Activated B cell treated with CpG ODN at 0.5 μM for 24 hours (primary cell): ENCODE measurements at regions of chr1 and their contacts with region 1.

Region 1: GRCh38 chr1:151198255-151199127 is at the start of gene PIP5K1A:
- DNase-seq: peak; percentile 94
- ATAC-seq: peak; percentile 93
- H3K4me3 Mint-ChIP-seq: peak within 1 kb of the TSS; percentile 99
- H3K27ac Mint-ChIP-seq: peak within 1 kb of the TSS; percentile 98
- H3K4me1 Mint-ChIP-seq: peaks cover 47% of the 10 kb centered on the region
- H3K27me3 Mint-ChIP-seq: no peaks in the 10 kb centered on the region
- CTCF ChIP-seq: no peak
- total RNA-seq, gene PIP5K1A: 63.2 and 77.7 TPM in 2 replicates

Region 2: GRCh38 chr1:151165738-151166505 is 32.6 kb before region 1 on chr1 and contains the starts of genes LYSMD1 and SCNM1:
- CTCF ChIA-PET with region 1: no interaction called
- POLR2A ChIA-PET with region 1: interaction called, 6 read pairs
- intact Hi-C with region 1: loop called (anchors 1 kb)
- DNase-seq: peak; percentile 87
- ATAC-seq: peak; percentile 96
- H3K4me3 Mint-ChIP-seq: peak within 1 kb of the TSS; percentile 92
- H3K27ac Mint-ChIP-seq: peak within 1 kb of the TSS; percentile 89
- H3K4me1 Mint-ChIP-seq: peaks cover 37% of the 10 kb centered on the region
- H3K27me3 Mint-ChIP-seq: no peaks in the 10 kb centered on the region
- CTCF ChIP-seq: no peak
- total RNA-seq, gene LYSMD1: 4.9 and 5.4 TPM in 2 replicates
- total RNA-seq, gene SCNM1: 52.8 and 58.2 TPM in 2 replicates

Region 3: DNA sequence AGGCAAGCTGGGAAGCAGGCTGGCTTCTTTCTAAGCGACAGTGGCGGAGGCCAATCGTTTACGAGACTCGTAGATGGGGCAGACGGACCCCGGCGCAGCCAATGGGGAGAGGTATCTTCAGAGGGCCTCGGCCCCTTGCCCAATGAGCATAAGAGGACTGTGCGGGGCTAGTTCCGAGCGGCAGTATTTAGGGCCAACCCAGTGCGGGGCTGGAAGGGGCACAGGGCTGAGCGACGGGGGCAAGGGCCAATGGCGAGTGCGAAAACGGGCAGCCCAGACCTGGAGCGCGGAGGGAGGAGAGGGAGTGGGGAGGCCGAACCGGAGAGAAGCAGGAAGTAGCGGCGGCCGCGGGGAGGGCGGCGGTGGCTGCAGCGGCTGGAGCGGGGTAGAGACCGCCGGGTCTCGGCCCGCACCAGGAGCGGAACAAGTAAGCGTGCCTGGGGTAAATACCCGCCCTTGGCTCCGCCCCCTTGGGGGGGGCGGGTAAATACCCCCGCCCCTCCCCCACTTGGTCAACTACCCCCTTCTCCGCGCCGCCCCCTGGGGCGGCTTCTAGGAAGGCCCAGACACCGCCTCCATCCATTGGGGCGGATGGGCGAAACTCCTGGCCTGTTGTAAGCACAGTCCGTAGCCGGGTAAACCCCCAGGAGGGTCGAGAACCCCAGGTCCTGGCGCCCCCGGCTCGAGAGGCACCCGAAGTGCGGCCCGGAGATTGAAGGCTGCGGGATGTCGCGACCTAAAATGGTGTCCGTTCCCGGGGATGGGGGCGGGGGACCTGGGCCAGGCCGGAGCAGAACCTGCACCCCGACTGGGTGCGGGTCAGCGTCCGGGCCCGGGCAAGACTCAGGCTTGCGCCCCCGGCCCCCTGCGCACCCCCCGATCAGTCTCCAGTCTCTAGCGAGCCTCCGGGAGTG is 83.7 kb after region 1 on chr1 and contains the start of gene ZNF687:
- CTCF ChIA-PET with region 1: no interaction called
- POLR2A ChIA-PET with region 1: interaction called, 4 read pairs
- intact Hi-C with region 1: loop called (anchors 1 kb)
- DNase-seq: peak; percentile 96
- ATAC-seq: peak; percentile 88
- H3K4me3 Mint-ChIP-seq: peak within 1 kb of the TSS; percentile 99
- H3K27ac Mint-ChIP-seq: peak within 1 kb of the TSS; percentile 99
- H3K4me1 Mint-ChIP-seq: peaks cover 54% of the 10 kb centered on the region
- H3K27me3 Mint-ChIP-seq: no peaks in the 10 kb centered on the region
- CTCF ChIP-seq: no peak
- total RNA-seq, gene ZNF687: 38.8 and 40.3 TPM in 2 replicates

Region 4: GRCh38 chr1:151334822-151335221 is 136.3 kb after region 1 on chr1:
- CTCF ChIA-PET with region 1: no interaction called
- POLR2A ChIA-PET with region 1: no interaction called
- intact Hi-C with region 1: no loop called
- DNase-seq: no peak
- ATAC-seq: no peak
- H3K4me3 Mint-ChIP-seq: no peak overlapping the region
- H3K27ac Mint-ChIP-seq: no peak overlapping the region
- H3K4me1 Mint-ChIP-seq: peaks cover 6% of the 10 kb centered on the region
- H3K27me3 Mint-ChIP-seq: no peaks in the 10 kb centered on the region
- CTCF ChIP-seq: no peak

Region 5: DNA sequence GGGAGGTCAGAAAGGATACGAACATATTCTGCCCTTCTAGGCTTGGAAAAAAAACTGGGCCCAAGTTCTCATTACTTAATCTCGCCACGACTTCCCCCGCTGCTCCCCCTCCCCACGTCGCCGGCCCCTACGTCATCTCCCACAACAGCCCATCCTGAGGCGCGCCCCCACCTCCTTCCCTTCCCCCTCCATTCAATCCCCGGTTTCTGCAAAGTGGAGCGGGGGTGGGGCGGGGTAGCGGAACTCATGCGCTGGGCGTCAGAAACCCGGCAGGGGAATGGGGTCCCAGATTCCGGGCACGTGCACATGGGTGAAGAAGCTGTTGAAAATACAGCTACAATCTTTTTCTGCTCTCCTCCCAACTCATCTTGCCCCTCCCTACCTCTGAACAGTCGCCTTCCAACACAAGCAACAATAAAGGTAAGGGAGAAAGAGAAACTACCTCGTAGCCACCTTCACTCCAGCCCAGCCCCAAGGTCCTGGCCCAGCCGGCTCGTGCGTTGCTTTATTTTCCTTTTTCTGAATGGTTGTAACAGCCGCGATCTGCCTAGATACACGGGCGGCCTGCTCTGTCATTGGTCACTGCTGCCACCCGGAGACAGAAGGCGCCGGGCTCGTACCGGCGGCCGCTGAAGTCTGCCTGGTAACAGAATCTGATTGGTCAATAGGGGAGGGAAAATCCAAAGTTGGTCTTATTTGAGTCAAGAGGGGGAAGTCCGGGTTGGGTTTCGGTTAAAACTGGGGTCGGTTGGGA is 148.5 kb after region 1 on chr1 and contains the start of gene RFX5:
- CTCF ChIA-PET with region 1: no interaction called
- POLR2A ChIA-PET with region 1: no interaction called
- intact Hi-C with region 1: loop called (anchors 2 kb)
- DNase-seq: peak; percentile 77
- ATAC-seq: peak; percentile 91
- H3K4me3 Mint-ChIP-seq: peak within 1 kb of the TSS; percentile 98
- H3K27ac Mint-ChIP-seq: peak within 1 kb of the TSS; percentile 100
- H3K4me1 Mint-ChIP-seq: peaks cover 55% of the 10 kb centered on the region
- H3K27me3 Mint-ChIP-seq: no peaks in the 10 kb centered on the region
- CTCF ChIP-seq: no peak
- total RNA-seq, gene RFX5: 222 and 262 TPM in 2 replicates

Region 6: GRCh38 chr1:151839457-151840405 is 641.2 kb after region 1 on chr1 and contains the start of gene C2CD4D:
- CTCF ChIA-PET with region 1: no interaction called
- POLR2A ChIA-PET with region 1: no interaction called
- intact Hi-C with region 1: loop called (anchors 5 kb)
- DNase-seq: peak; percentile 52
- ATAC-seq: peak; percentile 55
- H3K4me3 Mint-ChIP-seq: peak within 1 kb of the TSS; percentile 81
- H3K27ac Mint-ChIP-seq: peak within 1 kb of the TSS; percentile 35
- H3K4me1 Mint-ChIP-seq: peaks cover 52% of the 10 kb centered on the region
- H3K27me3 Mint-ChIP-seq: peaks cover 3% of the 10 kb centered on the region
- CTCF ChIP-seq: no peak
- total RNA-seq, gene C2CD4D: 0.15 TPM in 1 of 2 replicates, not detected in the other